HCT116 (cell line): ENCODE measurements at regions of chr4 and their contacts with region 1.

Region 1: GRCh38 chr4:124712372-124713184 is at the start of gene ANKRD50:
- DNase-seq: peak; percentile 81
- ATAC-seq: peak; percentile 79
- H3K4me3 ChIP-seq: peak within 1 kb of the TSS; percentile 68 to 72
- H3K27ac ChIP-seq: peak within 1 kb of the TSS; percentile 95
- H3K4me1 ChIP-seq: peaks cover 13 to 16% of the 10 kb centered on the region in 2 experiments; a peak in 3 of 4 replicates
- H3K27me3 ChIP-seq: no peaks in the 10 kb centered on the region
- CTCF ChIP-seq: no peak
- POLR2A ChIP-seq: peak; percentile 16
- RAD21 ChIP-seq: no peak
- total RNA-seq, gene ANKRD50: 16.5 TPM

Region 2: DNA sequence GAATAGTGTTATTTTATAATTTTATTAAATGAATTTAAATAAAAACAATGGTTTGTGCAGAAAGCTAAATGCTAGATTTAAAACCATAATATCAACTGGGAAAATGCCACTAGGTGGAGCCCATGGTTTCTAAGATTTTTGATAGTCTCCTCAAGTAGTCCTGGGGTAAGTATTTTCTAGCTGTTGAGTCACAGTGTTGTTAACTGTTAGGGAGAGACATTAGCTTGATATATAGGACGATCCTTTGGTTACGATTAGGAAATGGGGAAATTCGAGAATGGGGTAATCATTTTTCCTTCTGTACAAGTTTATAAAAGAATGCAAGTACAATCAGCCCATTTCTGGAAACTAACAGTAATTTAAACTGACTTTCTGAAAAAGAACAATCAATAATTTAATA is 378.5 kb before region 1 on chr4:
- CTCF ChIA-PET with region 1: interaction called, 4 read pairs
- POLR2A ChIA-PET with region 1: no interaction called
- RAD21 ChIA-PET with region 1: no interaction called
- intact Hi-C with region 1: loop called (anchors 5 kb)
- DNase-seq: peak; percentile 60
- ATAC-seq: peak; percentile 91
- H3K4me3 ChIP-seq: 0 out of 4 replicates have a peak overlapping the region, but pooled peaks of 1 of the 2 experiments have one; percentile 8
- H3K27ac ChIP-seq: no peak overlapping the region
- H3K4me1 ChIP-seq: peaks cover 0 to 3% of the 10 kb centered on the region in 2 experiments; a peak in 1 of 4 replicates
- H3K27me3 ChIP-seq: no peaks in the 10 kb centered on the region
- CTCF ChIP-seq: peak; percentile 48 to 70 (median 48); a peak in 5 of 6 replicates
- POLR2A ChIP-seq: no peak
- RAD21 ChIP-seq: peak; percentile 85

Region 3: GRCh38 chr4:124641715-124642381 is 70.7 kb before region 1 on chr4:
- CTCF ChIA-PET with region 1: no interaction called
- POLR2A ChIA-PET with region 1: no interaction called
- RAD21 ChIA-PET with region 1: no interaction called
- intact Hi-C with region 1: loop called (anchors 5 kb)
- DNase-seq: peak; percentile 91
- ATAC-seq: peak; percentile 65
- H3K4me3 ChIP-seq: peak overlapping the region in 1 of 2 experiments; percentile 31; a peak in 1 of 4 replicates
- H3K27ac ChIP-seq: peak overlapping the region; percentile 37; the same call in 1 of the 2 replicates
- H3K4me1 ChIP-seq: peaks cover 30 to 37% of the 10 kb centered on the region in 2 experiments
- H3K27me3 ChIP-seq: no peaks in the 10 kb centered on the region
- CTCF ChIP-seq: no peak
- POLR2A ChIP-seq: no peak
- RAD21 ChIP-seq: no peak

Region 4: DNA sequence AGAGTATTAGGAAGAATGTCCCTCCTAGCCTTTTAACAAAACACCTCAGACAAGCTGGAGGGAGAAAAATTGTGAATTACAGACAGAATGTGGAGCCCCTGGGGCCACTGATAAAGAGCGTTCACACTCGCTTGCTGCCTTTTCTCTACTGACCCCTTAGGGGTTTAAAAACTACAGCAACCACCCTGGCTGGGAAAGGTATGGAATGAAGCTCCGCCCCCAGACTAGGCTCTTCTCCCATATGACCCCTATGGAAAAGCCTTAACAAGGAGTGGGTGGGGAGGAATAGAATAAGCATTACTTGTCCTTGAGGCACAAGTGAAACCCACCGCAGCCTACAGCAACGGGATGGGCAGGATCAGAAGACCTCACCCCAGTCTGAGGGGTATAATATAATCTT is 26.3 kb before region 1 on chr4:
- CTCF ChIA-PET with region 1: no interaction called
- POLR2A ChIA-PET with region 1: no interaction called
- RAD21 ChIA-PET with region 1: no interaction called
- intact Hi-C with region 1: loop called (anchors 1 kb)
- DNase-seq: no peak
- ATAC-seq: no peak
- H3K4me3 ChIP-seq: no peak overlapping the region
- H3K27ac ChIP-seq: no peak overlapping the region
- H3K4me1 ChIP-seq: peaks cover 0 to 7% of the 10 kb centered on the region in 2 experiments; a peak in 1 of 4 replicates
- H3K27me3 ChIP-seq: no peaks in the 10 kb centered on the region
- CTCF ChIP-seq: no peak
- POLR2A ChIP-seq: no peak
- RAD21 ChIP-seq: no peak

Region 5: GRCh38 chr4:124940387-124940786 is 227.8 kb after region 1 on chr4:
- CTCF ChIA-PET with region 1: no interaction called
- POLR2A ChIA-PET with region 1: no interaction called
- RAD21 ChIA-PET with region 1: no interaction called
- intact Hi-C with region 1: loop called (anchors 10 kb)
- DNase-seq: peak; percentile 62
- ATAC-seq: peak; percentile 66
- H3K4me3 ChIP-seq: no peak overlapping the region
- H3K27ac ChIP-seq: peak overlapping the region; percentile 40; the same call in 1 of the 2 replicates
- H3K4me1 ChIP-seq: peaks cover 22 to 31% of the 10 kb centered on the region in 2 experiments
- H3K27me3 ChIP-seq: no peaks in the 10 kb centered on the region
- CTCF ChIP-seq: no peak
- POLR2A ChIP-seq: no peak
- RAD21 ChIP-seq: no peak; the same call in 1 of the 2 replicates

Region 6: GRCh38 chr4:125244848-125245450 is 532.4 kb after region 1 on chr4:
- CTCF ChIA-PET with region 1: interaction called, 4 read pairs
- POLR2A ChIA-PET with region 1: no interaction called
- RAD21 ChIA-PET with region 1: no interaction called
- intact Hi-C with region 1: loop called (anchors 5 kb)
- DNase-seq: no peak
- ATAC-seq: no peak
- H3K4me3 ChIP-seq: no peak overlapping the region
- H3K27ac ChIP-seq: no peak overlapping the region
- H3K4me1 ChIP-seq: no peaks in the 10 kb centered on the region
- H3K27me3 ChIP-seq: no peaks in the 10 kb centered on the region
- CTCF ChIP-seq: peak; percentile 12 to 56 (median 37); a peak in 3 of 6 replicates
- POLR2A ChIP-seq: no peak
- RAD21 ChIP-seq: peak; percentile 59